K562 (cell line): ENCODE measurements at regions of chr17 and their contacts with region 1.

Region 1: GRCh38 chr17:58006924-58007780 is at the start of gene SRSF1:
- DNase-seq: peak; percentile 90 to 99 (median 94)
- ATAC-seq: peak; percentile 85
- H3K4me3 ChIP-seq: peak within 1 kb of the TSS; percentile 94
- H3K27ac ChIP-seq: peak within 1 kb of the TSS; percentile 100
- H3K4me1 ChIP-seq: peaks cover 4 to 24% of the 10 kb centered on the region in 2 experiments; a peak in 3 of 5 replicates
- H3K27me3 ChIP-seq: no peaks in the 10 kb centered on the region
- CTCF ChIP-seq: no peak
- EP300 ChIP-seq: peak; percentile 19
- POLR2A ChIP-seq: peak; percentile 98
- RAD21 ChIP-seq: no peak
- polyA plus RNA-seq, gene SRSF1: 77.8 to 98.4 TPM

Region 2: GRCh38 chr17:57849874-57850754 is 157.0 kb before region 1 on chr17 and contains the start of gene MRPS23:
- CTCF ChIA-PET with region 1: no interaction called
- POLR2A ChIA-PET with region 1: interaction called, 10 read pairs
- in situ Hi-C with region 1: no loop called
- intact Hi-C with region 1: no loop called
- DNase-seq: peak; percentile 86 to 99 (median 88)
- ATAC-seq: peak; percentile 88
- H3K4me3 ChIP-seq: peak within 1 kb of the TSS; percentile 67
- H3K27ac ChIP-seq: peak within 1 kb of the TSS; percentile 73
- H3K4me1 ChIP-seq: peaks cover 32 to 36% of the 10 kb centered on the region in 2 experiments
- H3K27me3 ChIP-seq: no peaks in the 10 kb centered on the region
- CTCF ChIP-seq: peak in 1 of 3 experiments; percentile 21; a peak in 1 of 6 replicates
- EP300 ChIP-seq: peak; percentile 75; the same call in 1 of the 2 replicates
- POLR2A ChIP-seq: peak; percentile 95
- RAD21 ChIP-seq: no peak
- polyA plus RNA-seq, gene MRPS23: 233 to 298 TPM

Region 3: DNA sequence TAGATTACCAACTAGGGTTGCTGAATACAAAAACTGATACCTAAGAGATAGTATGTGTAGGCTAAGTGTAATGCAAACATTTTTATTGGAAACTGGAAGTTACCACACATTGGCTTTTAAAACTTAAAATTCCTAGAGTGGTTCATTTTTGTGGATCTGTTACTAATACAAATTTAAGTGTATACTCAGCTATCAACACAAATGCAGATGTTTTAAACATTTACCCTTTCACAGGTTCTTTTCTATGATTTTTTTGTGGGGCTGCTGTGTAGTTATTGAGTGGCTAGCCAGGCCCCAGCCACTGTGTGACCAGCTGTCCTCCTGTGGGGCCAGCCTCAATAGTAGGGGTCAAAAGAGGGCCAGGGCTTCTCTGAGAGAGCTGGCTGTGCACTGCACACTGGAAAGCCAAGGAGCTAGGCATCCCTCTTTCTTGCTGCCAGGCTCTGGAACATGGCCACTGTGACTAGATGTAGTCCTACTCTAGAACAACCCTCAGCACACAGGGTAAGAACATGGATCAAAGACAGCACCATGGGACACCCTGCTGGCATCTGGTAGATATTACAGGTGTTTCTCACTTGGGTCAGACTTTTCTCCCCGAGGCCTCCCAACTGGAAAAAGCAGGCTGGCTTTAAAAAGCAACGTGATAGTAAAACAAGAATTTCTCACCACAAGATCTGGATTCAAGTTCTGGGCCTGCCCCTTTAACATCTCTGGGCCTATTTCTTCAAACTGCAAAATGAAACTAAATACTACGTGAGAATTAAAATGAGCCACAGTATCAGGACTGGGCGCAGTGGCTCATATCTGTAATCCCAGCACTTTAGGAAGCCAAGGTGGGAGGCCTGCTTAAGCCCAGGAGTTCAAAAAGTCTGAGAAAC is 11.8 kb before region 1 on chr17:
- CTCF ChIA-PET with region 1: interaction called, 3 read pairs
- POLR2A ChIA-PET with region 1: interaction called, 82 read pairs
- in situ Hi-C with region 1: no loop called
- intact Hi-C with region 1: no loop called
- DNase-seq: peak; percentile 50 to 81 (median 65)
- ATAC-seq: peak; percentile 85
- H3K4me3 ChIP-seq: no peak overlapping the region
- H3K27ac ChIP-seq: no peak overlapping the region; the same call in 2 of the 3 replicates
- H3K4me1 ChIP-seq: peaks cover 2 to 31% of the 10 kb centered on the region in 2 experiments; a peak in 4 of 5 replicates
- H3K27me3 ChIP-seq: no peaks in the 10 kb centered on the region
- CTCF ChIP-seq: peak; percentile 70 to 80 (median 78)
- EP300 ChIP-seq: no peak
- POLR2A ChIP-seq: peak; percentile 79
- RAD21 ChIP-seq: peak; percentile 57 to 72

Region 4: GRCh38 chr17:58024945-58025344 is 17.8 kb after region 1 on chr17:
- CTCF ChIA-PET with region 1: no interaction called
- POLR2A ChIA-PET with region 1: interaction called, 18 read pairs
- in situ Hi-C with region 1: no loop called
- intact Hi-C with region 1: no loop called
- DNase-seq: no peak
- ATAC-seq: no peak
- H3K4me3 ChIP-seq: no peak overlapping the region
- H3K27ac ChIP-seq: no peak overlapping the region
- H3K4me1 ChIP-seq: no peaks in the 10 kb centered on the region
- H3K27me3 ChIP-seq: peaks cover 8 to 26% of the 10 kb centered on the region in 2 experiments; a peak in 4 of 5 replicates
- CTCF ChIP-seq: no peak
- EP300 ChIP-seq: no peak
- POLR2A ChIP-seq: no peak
- RAD21 ChIP-seq: no peak

Region 5: DNA sequence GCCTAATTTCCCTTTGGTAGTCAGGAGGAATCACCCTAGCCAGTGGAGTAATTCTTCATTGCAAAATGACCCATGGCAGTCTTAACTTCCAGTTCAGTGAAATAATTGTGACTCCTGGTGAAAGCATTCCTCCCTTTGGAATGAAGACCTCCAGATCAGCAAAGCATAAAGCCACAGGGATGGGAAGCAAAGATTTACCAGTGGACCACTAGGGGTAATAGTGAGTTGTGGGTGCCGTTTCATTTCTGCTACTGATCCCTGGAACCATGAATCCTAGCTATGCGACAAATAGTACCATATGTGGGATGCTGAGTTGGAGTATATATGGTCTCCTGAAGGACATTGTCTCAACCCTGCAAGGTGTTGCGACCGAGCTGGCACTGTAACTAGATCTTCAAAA is 89.7 kb after region 1 on chr17:
- CTCF ChIA-PET with region 1: no interaction called
- POLR2A ChIA-PET with region 1: interaction called, 4 read pairs
- in situ Hi-C with region 1: loop called (anchors 5 kb)
- intact Hi-C with region 1: no loop called
- DNase-seq: no peak
- ATAC-seq: no peak
- H3K4me3 ChIP-seq: no peak overlapping the region
- H3K27ac ChIP-seq: no peak overlapping the region
- H3K4me1 ChIP-seq: no peaks in the 10 kb centered on the region
- H3K27me3 ChIP-seq: no peaks in the 10 kb centered on the region; a peak in 1 of 5 replicates
- CTCF ChIP-seq: peak in 2 of 3 experiments; percentile 14 to 20; a peak in 2 of 6 replicates
- EP300 ChIP-seq: no peak
- POLR2A ChIP-seq: no peak
- RAD21 ChIP-seq: no peak